Activated CD8-positive, alpha-beta memory T cell treated with anti-CD3 and anti-CD28 coated beads, Interleukin-2, amount 10 ng/mL, durations not matched to agents 7 days and 5 days (primary cell): ENCODE measurements at regions of chr7 and their contacts with region 1.

Region 1: GRCh38 chr7:7103343-7104313 is 78.7 kb upstream of the C1GALT1 start:
- DNase-seq: no peak
- ATAC-seq: peak; percentile 82
- H3K4me3 Mint-ChIP-seq: no peak overlapping the region
- H3K27ac Mint-ChIP-seq: no peak overlapping the region
- H3K4me1 Mint-ChIP-seq: peaks cover 16% of the 10 kb centered on the region
- H3K27me3 Mint-ChIP-seq: no peaks in the 10 kb centered on the region

Region 2: DNA sequence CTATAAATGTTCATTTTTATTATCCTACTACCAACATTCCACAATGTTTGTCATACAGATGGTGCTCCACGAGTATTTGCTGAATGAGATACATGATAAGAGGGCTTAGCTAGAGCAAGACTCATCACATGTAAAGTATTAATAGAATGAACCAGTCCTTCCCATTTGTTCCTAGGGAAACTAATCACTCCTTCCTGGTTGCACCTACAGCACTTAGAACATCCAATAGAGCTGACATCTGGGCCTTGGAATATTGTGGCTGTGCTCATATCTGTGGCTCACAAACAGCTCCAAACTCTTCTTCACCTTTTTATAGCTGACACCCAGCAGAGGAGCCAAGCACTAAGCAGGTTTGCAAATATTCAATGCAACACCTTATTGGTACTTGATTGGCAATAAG is 13.2 kb before region 1 on chr7:
- CTCF ChIA-PET with region 1: interaction called, 15 read pairs
- DNase-seq: no peak
- ATAC-seq: no peak
- H3K4me3 Mint-ChIP-seq: no peak overlapping the region
- H3K27ac Mint-ChIP-seq: no peak overlapping the region
- H3K4me1 Mint-ChIP-seq: no peaks in the 10 kb centered on the region
- H3K27me3 Mint-ChIP-seq: peaks cover 8% of the 10 kb centered on the region

Region 3: GRCh38 chr7:7164591-7164990 is 61.0 kb after region 1 on chr7:
- CTCF ChIA-PET with region 1: no interaction called
- DNase-seq: no peak
- ATAC-seq: no peak
- H3K4me3 Mint-ChIP-seq: no peak overlapping the region
- H3K27ac Mint-ChIP-seq: no peak overlapping the region
- H3K4me1 Mint-ChIP-seq: peaks cover 18% of the 10 kb centered on the region
- H3K27me3 Mint-ChIP-seq: no peaks in the 10 kb centered on the region

Region 4: DNA sequence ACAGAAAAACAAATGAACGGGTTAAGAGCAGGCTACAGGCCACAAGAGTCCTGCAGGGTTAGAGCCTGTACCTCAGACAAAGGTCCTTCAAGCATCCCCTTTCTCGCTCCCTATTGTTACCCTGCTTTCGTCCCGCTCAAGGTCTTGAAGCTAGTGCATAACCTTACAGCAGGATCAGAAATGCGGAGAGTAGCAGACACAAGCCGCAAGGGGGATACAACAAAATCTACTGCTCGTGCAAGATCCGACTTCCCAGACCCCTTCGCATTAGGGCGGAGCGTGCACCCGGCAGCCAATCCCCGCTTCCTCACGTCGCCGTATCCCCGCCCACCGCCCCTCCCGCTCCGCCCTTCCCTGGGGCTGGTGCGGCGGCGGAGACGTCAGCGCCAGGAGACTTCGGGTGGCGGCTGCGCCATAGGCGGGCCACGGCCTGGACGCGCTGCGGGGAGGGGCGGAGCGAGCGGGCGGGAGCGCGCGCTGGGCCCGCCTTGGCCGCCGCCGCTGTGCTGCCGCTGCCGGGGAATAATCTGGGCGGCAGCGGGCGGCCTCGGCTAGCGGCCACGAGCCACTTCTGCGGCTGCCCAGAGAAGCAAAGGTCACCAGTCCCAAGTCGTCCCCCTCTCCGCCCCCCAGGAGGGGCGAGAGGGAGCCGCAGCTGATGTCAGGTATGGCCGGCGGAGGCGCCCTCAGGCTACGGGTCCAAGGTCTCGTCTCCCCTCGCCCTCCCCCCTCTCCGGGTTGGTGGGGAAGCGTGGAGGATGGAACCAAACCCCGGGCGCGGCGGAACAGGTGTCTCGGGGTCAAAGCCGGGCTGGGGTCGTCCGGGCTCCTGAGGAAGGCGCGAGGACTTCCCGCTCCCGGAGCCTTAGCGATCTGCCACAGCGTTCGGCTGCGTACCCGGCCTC is 78.8 kb after region 1 on chr7 and contains the start of gene C1GALT1:
- CTCF ChIA-PET with region 1: interaction called, 29 read pairs
- DNase-seq: peak; percentile 97
- ATAC-seq: peak; percentile 85
- H3K4me3 Mint-ChIP-seq: peak within 1 kb of the TSS; percentile 84
- H3K27ac Mint-ChIP-seq: peak within 1 kb of the TSS; percentile 98
- H3K4me1 Mint-ChIP-seq: peaks cover 27% of the 10 kb centered on the region
- H3K27me3 Mint-ChIP-seq: no peaks in the 10 kb centered on the region
- total RNA-seq, gene C1GALT1: 45.9 to 55.8 TPM